ENCODE measurements at regions of chr9 and their contacts with region 1.

Region 1: GRCh38 chr9:32350682-32351081 is 33.8 kb upstream of the ACO1 start:
- DNase-seq: no peak
- H3K4me3 ChIP-seq: no peak overlapping the region
- H3K27ac ChIP-seq: no peak overlapping the region
- H3K4me1 ChIP-seq: no peaks in the 10 kb centered on the region
- H3K27me3 ChIP-seq: no peaks in the 10 kb centered on the region
- CTCF ChIP-seq: no peak

Region 2: GRCh38 chr9:32294106-32294505 is 56.6 kb before region 1 on chr9:
- intact Hi-C with region 1: loop called (anchors 10 kb)
- DNase-seq: no peak
- H3K4me3 ChIP-seq: no peak overlapping the region
- H3K27ac ChIP-seq: no peak overlapping the region
- H3K4me1 ChIP-seq: no peaks in the 10 kb centered on the region
- H3K27me3 ChIP-seq: no peaks in the 10 kb centered on the region
- CTCF ChIP-seq: no peak

Region 3: GRCh38 chr9:32487981-32488380 is 137.3 kb after region 1 on chr9:
- intact Hi-C with region 1: no loop called
- DNase-seq: no peak
- H3K4me3 ChIP-seq: no peak overlapping the region
- H3K27ac ChIP-seq: no peak overlapping the region
- H3K4me1 ChIP-seq: no peaks in the 10 kb centered on the region
- H3K27me3 ChIP-seq: no peaks in the 10 kb centered on the region
- CTCF ChIP-seq: no peak

Measured in colonic mucosa (tissue), 4 donors.